Left colon (tissue), 2 donors: ENCODE measurements at regions of chr14 and their contacts with region 1.

Region 1: GRCh38 chr14:55265197-55265596 is 6.0 kb upstream of the FBXO34 start:
- DNase-seq: no peak
- ATAC-seq: no peak

Region 2: DNA sequence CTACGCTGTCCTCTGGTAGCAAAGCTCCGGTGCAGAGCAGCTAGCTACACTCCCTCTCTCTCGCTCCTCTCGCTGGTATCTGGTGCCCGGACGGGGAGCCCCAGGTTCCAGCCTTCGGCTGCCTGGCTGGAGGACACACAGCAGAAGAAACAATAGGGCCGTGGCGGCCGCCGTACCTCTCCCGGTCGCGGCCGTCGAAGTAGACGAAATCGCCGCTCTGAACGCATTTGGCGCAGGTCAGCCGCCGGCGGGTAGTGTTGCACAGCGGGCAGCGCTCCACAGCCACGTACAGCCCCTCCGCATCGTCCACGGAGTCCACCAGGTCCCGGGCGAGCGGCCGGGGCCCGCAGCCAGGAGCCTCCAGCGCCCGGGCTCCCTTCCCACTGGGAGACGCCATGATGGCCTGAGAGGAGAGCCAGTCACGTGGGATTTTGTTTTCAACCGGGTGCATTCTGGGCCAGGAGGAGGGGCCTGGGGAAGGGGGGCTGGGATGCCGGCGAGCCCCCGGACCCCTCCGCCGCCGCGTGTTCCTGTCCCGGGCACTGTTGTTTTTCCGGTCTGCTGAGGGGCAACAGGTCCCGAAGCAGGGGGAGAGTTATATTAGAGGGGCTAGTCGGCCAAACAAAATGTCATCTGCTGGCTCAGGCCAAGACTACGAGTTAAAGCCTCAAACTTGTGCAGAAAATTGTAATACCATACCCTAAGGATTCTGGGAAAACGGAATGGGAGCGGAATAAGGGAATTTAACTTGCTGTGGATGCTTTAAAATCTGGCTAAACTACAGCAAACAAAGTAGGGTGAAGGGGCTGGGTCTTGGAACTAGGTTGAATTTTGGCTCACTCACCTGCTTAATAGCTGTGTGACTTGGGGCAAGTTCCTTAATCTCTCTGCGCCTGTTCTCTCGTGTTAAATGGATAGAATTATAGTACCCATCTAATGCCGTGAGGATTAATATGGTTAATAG is 146.5 kb after region 1 on chr14 and contains the start of gene ATG14:
- intact Hi-C with region 1: loop called in 1 of 2 experiments (anchors 10 kb)
- DNase-seq: peak; percentile 82 to 84
- ATAC-seq: peak; percentile 99
- total RNA-seq, gene ATG14: 6.3 to 10.0 TPM